H1 (cell line): ENCODE measurements at regions of chr3 and their contacts with region 1.

Region 1: DNA sequence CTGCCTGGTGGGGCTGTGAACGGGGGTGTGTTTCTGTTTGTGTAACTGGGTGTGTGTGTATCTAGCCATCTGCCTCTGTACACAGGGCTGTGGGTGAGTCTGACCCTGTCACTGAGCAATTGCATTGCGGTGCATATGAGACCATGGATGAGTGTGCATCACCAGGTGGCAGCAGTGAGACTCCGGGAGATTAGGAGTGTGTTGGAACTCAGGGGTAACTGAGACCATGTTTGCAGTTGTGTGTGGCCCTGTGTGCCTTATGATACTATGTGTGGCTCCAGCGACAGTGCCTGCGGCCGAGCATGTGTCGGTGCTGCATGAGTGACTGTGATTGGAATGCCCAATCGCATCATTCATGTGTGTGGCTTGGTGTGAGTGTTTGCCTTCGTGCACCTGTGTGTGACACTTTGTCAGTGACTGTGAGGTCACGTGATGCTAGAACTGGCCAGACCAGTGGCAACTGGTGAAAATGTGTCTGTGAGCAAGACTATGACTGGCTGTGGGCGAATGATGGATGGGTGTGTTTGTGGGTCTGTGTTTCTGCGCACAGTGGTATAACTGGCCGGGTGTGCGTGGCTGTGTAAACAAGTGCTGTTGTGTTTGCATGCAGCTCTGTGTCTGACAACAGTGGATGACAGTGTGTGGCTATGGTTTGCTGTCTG is 14.0 kb downstream of the VILL start:
- DNase-seq: peak in 1 of 2 experiments; percentile 70
- H3K4me3 ChIP-seq: no peak overlapping the region
- H3K27ac ChIP-seq: no peak overlapping the region
- H3K4me1 ChIP-seq: no peaks in the 10 kb centered on the region
- H3K27me3 ChIP-seq: no peaks in the 10 kb centered on the region
- CTCF ChIP-seq: peak in 2 of 3 experiments; percentile 59 to 79; a peak in 3 of 4 replicates
- EP300 ChIP-seq: no peak
- POLR2A ChIP-seq: no peak
- RAD21 ChIP-seq: peak; percentile 53 to 58

Region 2: GRCh38 chr3:37974121-37975083 is 30.1 kb before region 1 on chr3:
- CTCF ChIA-PET with region 1: interaction called, 45 read pairs
- POLR2A ChIA-PET with region 1: no interaction called
- DNase-seq: peak in 1 of 2 experiments; percentile 83
- H3K4me3 ChIP-seq: no peak overlapping the region
- H3K27ac ChIP-seq: no peak overlapping the region
- H3K4me1 ChIP-seq: peaks cover 0 to 3% (median 0%) of the 10 kb centered on the region in 4 experiments; a peak in 1 of 7 replicates
- H3K27me3 ChIP-seq: no peaks in the 10 kb centered on the region
- CTCF ChIP-seq: peak; percentile 85 to 96 (median 94)
- EP300 ChIP-seq: no peak
- POLR2A ChIP-seq: no peak
- RAD21 ChIP-seq: peak; percentile 84 to 87

Region 3: DNA sequence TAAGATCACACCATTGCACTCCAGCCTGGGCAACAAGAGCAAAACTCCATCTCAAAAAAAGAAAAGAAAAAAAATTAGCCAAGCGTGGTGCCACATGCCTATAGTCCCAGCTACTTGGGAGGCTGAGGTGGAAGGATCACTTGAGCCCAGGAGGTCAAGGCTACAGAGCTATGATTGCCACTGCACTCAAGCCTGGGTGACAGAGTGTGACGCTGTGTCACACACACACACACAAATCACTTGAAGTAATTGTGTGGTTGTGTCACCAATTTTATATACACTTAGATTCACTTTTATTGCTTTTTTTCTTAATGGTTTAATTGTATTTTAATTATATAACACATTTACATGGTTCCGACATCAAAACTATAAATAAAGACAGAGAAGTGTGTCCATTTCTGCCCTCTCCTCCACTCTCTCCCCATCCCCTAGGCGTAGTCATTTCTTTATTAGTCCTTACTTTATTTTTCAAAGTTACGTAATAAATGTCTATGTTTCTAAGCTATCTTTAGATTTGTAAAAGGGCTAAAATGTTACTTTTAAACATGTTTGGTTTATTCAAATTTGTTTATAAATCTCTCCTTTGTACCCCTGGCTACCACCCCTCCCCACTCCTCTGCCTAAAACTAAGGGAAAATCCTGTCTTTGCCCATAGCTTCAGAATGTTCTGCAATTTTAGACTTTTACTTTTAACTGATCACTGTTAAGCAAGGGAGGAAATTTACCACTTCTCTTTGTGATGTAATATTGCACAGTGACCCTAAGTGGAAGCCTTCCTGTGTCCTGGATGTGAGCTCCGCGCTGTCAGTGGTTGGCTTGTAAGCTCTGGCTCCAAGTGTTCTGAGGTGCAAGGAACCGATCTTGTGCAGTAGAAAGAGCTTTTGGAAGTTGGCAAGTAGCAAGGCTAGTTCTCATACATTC is 24.7 kb before region 1 on chr3:
- CTCF ChIA-PET with region 1: interaction called, 45 read pairs
- POLR2A ChIA-PET with region 1: no interaction called
- DNase-seq: no peak
- H3K4me3 ChIP-seq: no peak overlapping the region
- H3K27ac ChIP-seq: no peak overlapping the region
- H3K4me1 ChIP-seq: no peaks in the 10 kb centered on the region
- H3K27me3 ChIP-seq: no peaks in the 10 kb centered on the region
- CTCF ChIP-seq: no peak
- EP300 ChIP-seq: no peak
- POLR2A ChIP-seq: no peak
- RAD21 ChIP-seq: no peak

Region 4: GRCh38 chr3:37986479-37987314 is 17.8 kb before region 1 on chr3:
- CTCF ChIA-PET with region 1: interaction called, 25 read pairs
- POLR2A ChIA-PET with region 1: no interaction called
- DNase-seq: no peak
- H3K4me3 ChIP-seq: no peak overlapping the region
- H3K27ac ChIP-seq: no peak overlapping the region
- H3K4me1 ChIP-seq: peaks cover 0 to 9% (median 6%) of the 10 kb centered on the region in 4 experiments; a peak in 5 of 7 replicates
- H3K27me3 ChIP-seq: peaks cover 0 to 2% (median 0%) of the 10 kb centered on the region in 4 experiments; a peak in 2 of 7 replicates
- CTCF ChIP-seq: no peak
- EP300 ChIP-seq: no peak
- POLR2A ChIP-seq: no peak
- RAD21 ChIP-seq: no peak

Region 5: GRCh38 chr3:38017442-38018295 is 13.1 kb after region 1 on chr3:
- CTCF ChIA-PET with region 1: interaction called, 74 read pairs
- POLR2A ChIA-PET with region 1: interaction called, 4 read pairs
- DNase-seq: no peak
- H3K4me3 ChIP-seq: no peak overlapping the region
- H3K27ac ChIP-seq: no peak overlapping the region
- H3K4me1 ChIP-seq: no peaks in the 10 kb centered on the region
- H3K27me3 ChIP-seq: no peaks in the 10 kb centered on the region
- CTCF ChIP-seq: no peak
- EP300 ChIP-seq: no peak
- POLR2A ChIP-seq: no peak
- RAD21 ChIP-seq: no peak

Region 6: GRCh38 chr3:38022896-38023709 is 18.6 kb after region 1 on chr3:
- CTCF ChIA-PET with region 1: interaction called, 74 read pairs
- POLR2A ChIA-PET with region 1: no interaction called
- DNase-seq: no peak
- H3K4me3 ChIP-seq: peak overlapping the region in 2 of 4 experiments; percentile 63 to 77; a peak in 1 of 8 replicates
- H3K27ac ChIP-seq: no peak overlapping the region
- H3K4me1 ChIP-seq: peaks cover 0 to 6% (median 2%) of the 10 kb centered on the region in 4 experiments; a peak in 4 of 7 replicates
- H3K27me3 ChIP-seq: peaks cover 9 to 26% (median 23%) of the 10 kb centered on the region in 4 experiments
- CTCF ChIP-seq: no peak
- EP300 ChIP-seq: no peak
- POLR2A ChIP-seq: no peak
- RAD21 ChIP-seq: no peak

Region 7: DNA sequence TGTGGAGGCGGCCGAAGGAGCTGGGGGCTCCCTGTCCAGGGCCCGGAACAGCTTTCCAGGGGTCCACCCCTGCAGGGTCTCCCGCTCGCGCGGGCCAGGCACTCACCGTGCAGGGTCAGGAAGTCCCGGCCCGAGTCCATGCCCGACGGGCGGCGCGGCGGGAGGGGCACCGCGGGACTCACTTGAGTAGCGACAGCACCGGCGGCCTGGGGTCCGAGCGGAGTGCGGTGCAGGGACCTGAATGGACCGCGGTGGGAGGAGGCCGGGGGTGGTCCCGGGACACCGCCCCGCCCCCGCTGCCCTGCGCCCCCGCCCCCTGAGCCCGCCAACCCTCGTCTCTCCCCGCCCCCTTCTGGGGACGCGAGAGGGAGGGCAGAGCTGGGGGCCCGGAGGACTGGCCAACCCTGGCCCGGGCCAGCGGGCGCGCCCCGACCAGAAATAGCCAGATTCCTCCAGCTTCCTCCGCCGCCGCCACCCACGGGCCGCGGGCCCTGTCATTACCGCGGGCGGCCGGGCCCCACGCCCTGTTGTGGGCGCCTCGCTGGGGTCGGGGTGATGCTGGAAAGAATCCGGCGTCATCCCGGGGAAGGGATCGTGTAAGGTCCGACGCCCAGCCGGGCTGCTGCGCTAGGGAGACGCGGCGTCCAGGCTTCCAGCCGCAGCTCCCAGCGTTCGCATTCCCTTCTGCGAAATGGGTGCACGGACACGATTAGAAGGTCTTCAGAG is 25.0 kb after region 1 on chr3 and contains the start of gene PLCD1:
- CTCF ChIA-PET with region 1: interaction called, 15 read pairs
- POLR2A ChIA-PET with region 1: no interaction called
- DNase-seq: peak in 1 of 2 experiments; percentile 86
- H3K4me3 ChIP-seq: peak within 1 kb of the TSS; percentile 53 to 88 (median 62)
- H3K27ac ChIP-seq: no peak within 1 kb of the TSS
- H3K4me1 ChIP-seq: peaks cover 0 to 7% (median 4%) of the 10 kb centered on the region in 4 experiments; a peak in 6 of 7 replicates
- H3K27me3 ChIP-seq: peaks cover 27 to 58% (median 50%) of the 10 kb centered on the region in 4 experiments
- CTCF ChIP-seq: no peak
- EP300 ChIP-seq: no peak
- POLR2A ChIP-seq: no peak
- RAD21 ChIP-seq: no peak
- total RNA-seq, gene PLCD1: 15.7 and 19.2 TPM in 2 replicates

Region 8: GRCh38 chr3:38157595-38157994 is 153.0 kb after region 1 on chr3:
- CTCF ChIA-PET with region 1: no interaction called
- POLR2A ChIA-PET with region 1: no interaction called
- DNase-seq: no peak
- H3K4me3 ChIP-seq: no peak overlapping the region
- H3K27ac ChIP-seq: no peak overlapping the region
- H3K4me1 ChIP-seq: no peaks in the 10 kb centered on the region; a peak in 1 of 7 replicates
- H3K27me3 ChIP-seq: no peaks in the 10 kb centered on the region
- CTCF ChIP-seq: no peak
- EP300 ChIP-seq: no peak
- POLR2A ChIP-seq: no peak
- RAD21 ChIP-seq: no peak